ENCODE measurements at regions of chr1 and their contacts with region 1.

Region 1: GRCh38 chr1:27357281-27358037 is 9.3 kb downstream of the MAP3K6 start:
- DNase-seq: peak; percentile 64 to 93 (median 81)
- ATAC-seq: peak; percentile 78
- H3K4me3 ChIP-seq: peak overlapping the region; percentile 57 to 78
- H3K4me3 Mint-ChIP-seq: peak overlapping the region; percentile 86
- H3K27ac ChIP-seq: peak overlapping the region; percentile 38 to 59
- H3K27ac Mint-ChIP-seq: peak overlapping the region; percentile 89
- H3K4me1 ChIP-seq: peaks cover 46% of the 10 kb centered on the region
- H3K4me1 Mint-ChIP-seq: peaks cover 55% of the 10 kb centered on the region
- H3K27me3 ChIP-seq: no peaks in the 10 kb centered on the region
- H3K27me3 Mint-ChIP-seq: no peaks in the 10 kb centered on the region
- CTCF ChIP-seq: peak; percentile 91

Region 2: DNA sequence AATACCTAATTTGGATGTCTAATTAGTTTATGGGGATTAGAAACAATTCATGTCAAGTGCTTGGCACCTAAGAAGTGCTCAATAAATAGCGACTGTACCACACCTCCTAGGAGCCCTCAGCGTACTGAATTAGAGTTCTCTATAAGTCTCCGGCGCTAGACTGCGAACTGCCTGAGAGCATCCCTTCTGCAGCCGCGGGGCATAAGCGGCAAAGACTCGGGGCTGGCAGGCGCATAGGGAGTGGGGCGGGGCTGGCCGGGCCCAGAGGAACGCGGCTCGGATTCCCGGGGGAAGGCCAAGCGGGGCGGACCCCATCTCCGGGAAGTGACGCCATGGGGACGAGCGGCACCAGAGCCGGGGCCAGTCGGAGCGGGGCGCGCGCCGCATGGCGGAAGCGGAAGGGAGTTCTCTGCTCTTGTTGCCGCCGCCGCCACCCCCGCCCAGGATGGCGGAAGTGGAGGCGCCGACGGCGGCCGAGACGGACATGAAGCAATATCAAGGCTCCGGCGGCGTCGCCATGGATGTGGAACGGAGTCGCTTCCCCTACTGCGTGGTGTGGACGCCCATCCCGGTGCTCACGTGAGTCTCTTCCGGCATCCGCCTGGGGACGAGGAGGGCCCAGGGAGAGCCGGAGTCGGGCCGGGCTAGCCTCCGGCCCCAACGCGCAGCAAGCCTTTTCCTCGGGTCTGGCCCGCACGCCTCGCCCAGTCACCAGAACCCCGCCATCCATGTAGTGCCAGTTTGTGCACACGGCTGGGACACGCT is 35.5 kb before region 1 on chr1 and contains the start of gene TMEM222:
- CTCF ChIA-PET with region 1: interaction called, 18 read pairs
- POLR2A ChIA-PET with region 1: interaction called, 6 read pairs
- intact Hi-C with region 1: loop called (anchors 1 to 5 kb)
- DNase-seq: peak; percentile 95 to 99 (median 97)
- ATAC-seq: peak; percentile 93
- H3K4me3 ChIP-seq: peak within 1 kb of the TSS; percentile 95 to 99
- H3K4me3 Mint-ChIP-seq: peak within 1 kb of the TSS; percentile 98
- H3K27ac ChIP-seq: peak within 1 kb of the TSS; percentile 88 to 95
- H3K27ac Mint-ChIP-seq: peak within 1 kb of the TSS; percentile 97
- H3K4me1 ChIP-seq: peaks cover 40% of the 10 kb centered on the region
- H3K4me1 Mint-ChIP-seq: peaks cover 48% of the 10 kb centered on the region
- H3K27me3 ChIP-seq: no peaks in the 10 kb centered on the region
- H3K27me3 Mint-ChIP-seq: no peaks in the 10 kb centered on the region
- CTCF ChIP-seq: no peak
- total RNA-seq, gene TMEM222: 24.1 to 25.2 TPM

Region 3: DNA sequence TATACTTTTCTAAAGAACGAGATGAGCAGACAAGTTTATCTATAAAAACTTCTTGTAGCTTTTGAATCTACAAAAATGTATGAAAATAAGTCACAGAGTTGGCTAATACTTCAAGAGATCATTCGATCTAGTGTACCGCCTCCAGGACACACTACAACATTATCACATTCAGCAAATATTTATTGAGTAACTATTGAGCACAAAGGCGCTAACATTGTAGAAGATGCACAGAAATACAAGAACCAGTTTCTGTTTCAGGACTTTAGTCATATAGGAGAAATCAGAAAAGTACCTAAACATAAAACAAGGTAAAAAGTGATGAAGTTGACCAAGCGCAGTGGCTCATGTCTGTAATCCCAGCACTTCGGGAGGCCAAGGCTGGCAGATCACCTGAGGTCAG is 111.9 kb after region 1 on chr1:
- CTCF ChIA-PET with region 1: no interaction called
- POLR2A ChIA-PET with region 1: no interaction called
- intact Hi-C with region 1: no loop called
- DNase-seq: no peak
- ATAC-seq: no peak
- H3K4me3 ChIP-seq: no peak overlapping the region
- H3K4me3 Mint-ChIP-seq: no peak overlapping the region
- H3K27ac ChIP-seq: no peak overlapping the region
- H3K27ac Mint-ChIP-seq: peak overlapping the region; percentile 67
- H3K4me1 ChIP-seq: peaks cover 38% of the 10 kb centered on the region
- H3K4me1 Mint-ChIP-seq: peaks cover 68% of the 10 kb centered on the region
- H3K27me3 ChIP-seq: no peaks in the 10 kb centered on the region
- H3K27me3 Mint-ChIP-seq: no peaks in the 10 kb centered on the region
- CTCF ChIP-seq: no peak

Region 4: GRCh38 chr1:27760426-27760825 is 403.0 kb after region 1 on chr1:
- CTCF ChIA-PET with region 1: no interaction called
- POLR2A ChIA-PET with region 1: no interaction called
- intact Hi-C with region 1: no loop called
- DNase-seq: peak in 1 of 9 experiments; percentile 9
- ATAC-seq: no peak
- H3K4me3 ChIP-seq: no peak overlapping the region
- H3K4me3 Mint-ChIP-seq: no peak overlapping the region
- H3K27ac ChIP-seq: no peak overlapping the region
- H3K27ac Mint-ChIP-seq: no peak overlapping the region
- H3K4me1 ChIP-seq: no peaks in the 10 kb centered on the region
- H3K4me1 Mint-ChIP-seq: no peaks in the 10 kb centered on the region
- H3K27me3 ChIP-seq: no peaks in the 10 kb centered on the region
- H3K27me3 Mint-ChIP-seq: no peaks in the 10 kb centered on the region
- CTCF ChIP-seq: no peak

Measured in CD8-positive, alpha-beta T cell (primary cell).